ENCODE measurements at regions of chr18 and their contacts with region 1.

Region 1: DNA sequence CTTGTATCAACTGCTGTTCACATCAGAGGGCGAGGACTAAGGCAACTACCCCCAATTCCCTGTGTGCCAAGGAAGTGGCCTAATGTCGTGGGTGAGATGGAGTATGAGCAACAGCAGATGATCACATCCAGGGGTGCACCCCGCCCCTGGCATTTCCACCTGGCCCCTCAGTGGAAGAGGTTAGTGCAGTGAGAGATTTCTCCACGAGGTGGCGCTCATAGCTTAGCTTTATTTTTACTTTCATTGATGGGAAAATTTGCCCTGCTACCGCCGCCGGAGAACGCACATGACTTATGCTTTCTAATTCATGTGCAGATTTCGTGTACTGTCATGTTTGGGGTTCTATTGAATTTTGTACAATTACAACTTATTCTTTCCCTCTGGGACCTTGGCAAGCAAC is 470.6 kb upstream of the MEX3C start:
- H3K4me3 ChIP-seq: no peak overlapping the region
- H3K27ac ChIP-seq: no peak overlapping the region
- H3K4me1 ChIP-seq: 0 out of 2 replicates have a peak, but pooled peaks cover 2% of the 10 kb centered on the region
- CTCF ChIP-seq: peak; percentile 54

Region 2: DNA sequence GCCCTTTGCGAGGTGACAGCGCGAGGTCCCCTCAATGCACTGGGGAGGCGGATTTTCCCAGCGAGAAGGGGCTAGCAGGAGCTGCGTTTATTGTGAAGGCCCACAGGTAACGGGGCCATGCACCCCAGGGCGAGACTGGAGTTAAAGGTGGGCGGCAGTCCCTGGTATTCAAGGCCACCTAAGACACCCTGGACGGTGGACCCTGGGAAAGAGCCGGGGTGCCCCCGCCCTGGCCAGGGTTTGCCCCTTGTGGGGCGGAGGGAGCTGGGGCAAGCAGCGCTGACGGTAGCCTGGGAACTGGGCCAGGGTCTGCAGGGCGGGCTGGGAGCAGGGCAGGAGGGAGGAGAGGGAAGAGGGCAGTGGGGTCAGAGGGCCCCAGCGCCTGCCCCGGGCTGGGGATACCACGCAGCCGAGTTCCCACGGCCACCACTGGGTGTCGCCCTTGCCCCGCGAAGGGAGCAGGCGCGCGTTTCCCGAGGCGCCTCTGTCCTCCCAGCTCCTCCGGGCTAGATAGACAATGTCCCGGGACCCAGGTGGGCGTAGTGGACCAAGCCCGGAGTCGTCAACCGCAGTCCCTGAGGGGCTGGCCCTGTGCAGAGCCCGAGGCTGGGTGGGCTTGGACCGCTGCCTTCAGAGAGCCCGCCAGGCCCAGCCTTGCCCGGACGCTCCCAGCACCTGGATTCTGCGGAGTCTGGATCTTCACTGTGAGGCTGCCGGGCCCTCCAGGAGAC is 557.9 kb before region 1 on chr18:
- CTCF ChIA-PET with region 1: interaction called, 11 read pairs
- POLR2A ChIA-PET with region 1: no interaction called
- H3K4me3 ChIP-seq: no peak overlapping the region
- H3K27ac ChIP-seq: no peak overlapping the region
- H3K4me1 ChIP-seq: no peaks in the 10 kb centered on the region
- CTCF ChIP-seq: peak; percentile 94

Region 3: GRCh38 chr18:52288403-52289004 is 620.4 kb after region 1 on chr18:
- CTCF ChIA-PET with region 1: interaction called, 27 read pairs
- POLR2A ChIA-PET with region 1: no interaction called
- H3K4me3 ChIP-seq: no peak overlapping the region
- H3K27ac ChIP-seq: no peak overlapping the region
- H3K4me1 ChIP-seq: no peaks in the 10 kb centered on the region
- CTCF ChIP-seq: no peak